ENCODE measurements at regions of chr17 and their contacts with region 1.

Region 1: GRCh38 chr17:18904482-18904881 is 46.6 kb downstream of the PRPSAP2 start:
- DNase-seq: no peak
- ATAC-seq: no peak
- H3K4me3 ChIP-seq: no peak overlapping the region
- H3K4me3 Mint-ChIP-seq: no peak overlapping the region
- H3K27ac ChIP-seq: no peak overlapping the region
- H3K27ac Mint-ChIP-seq: no peak overlapping the region
- H3K4me1 ChIP-seq: peaks cover 30 to 35% of the 10 kb centered on the region in 2 donors
- H3K4me1 Mint-ChIP-seq: peaks cover 36% of the 10 kb centered on the region
- H3K27me3 ChIP-seq: no peaks in the 10 kb centered on the region
- H3K27me3 Mint-ChIP-seq: no peaks in the 10 kb centered on the region
- CTCF ChIP-seq: no peak

Region 2: GRCh38 chr17:18855831-18856569 is 48.5 kb before region 1 on chr17:
- CTCF ChIA-PET with region 1: no interaction called
- POLR2A ChIA-PET with region 1: no interaction called
- intact Hi-C with region 1: loop called (anchors 10 kb)
- DNase-seq: peak; percentile 91
- ATAC-seq: peak; percentile 78
- H3K4me3 ChIP-seq: peak overlapping the region; percentile 60 to 88 (median 76)
- H3K4me3 Mint-ChIP-seq: peak overlapping the region; percentile 92
- H3K27ac ChIP-seq: peak overlapping the region; percentile 68 to 79
- H3K27ac Mint-ChIP-seq: peak overlapping the region; percentile 93
- H3K4me1 ChIP-seq: peaks cover 34 to 49% of the 10 kb centered on the region in 2 donors
- H3K4me1 Mint-ChIP-seq: peaks cover 44% of the 10 kb centered on the region
- H3K27me3 ChIP-seq: no peaks in the 10 kb centered on the region
- H3K27me3 Mint-ChIP-seq: no peaks in the 10 kb centered on the region
- CTCF ChIP-seq: no peak

Region 3: GRCh38 chr17:18951941-18952842 is 47.7 kb after region 1 on chr17 and contains the start of gene SLC5A10:
- CTCF ChIA-PET with region 1: no interaction called
- POLR2A ChIA-PET with region 1: no interaction called
- intact Hi-C with region 1: no loop called
- DNase-seq: no peak
- ATAC-seq: no peak
- H3K4me3 ChIP-seq: no peak within 1 kb of the TSS
- H3K4me3 Mint-ChIP-seq: no peak within 1 kb of the TSS
- H3K27ac ChIP-seq: no peak within 1 kb of the TSS
- H3K27ac Mint-ChIP-seq: no peak within 1 kb of the TSS
- H3K4me1 ChIP-seq: peaks cover 0 to 5% of the 10 kb centered on the region in 2 donors
- H3K4me1 Mint-ChIP-seq: peaks cover 3% of the 10 kb centered on the region
- H3K27me3 ChIP-seq: peaks cover 0 to 9% (median 0%) of the 10 kb centered on the region in 4 experiments
- H3K27me3 Mint-ChIP-seq: peaks cover 21% of the 10 kb centered on the region
- CTCF ChIP-seq: no peak
- total RNA-seq, gene SLC5A10: not detected in 2 replicates

Measured in B cell (primary cell).